Gastrocnemius medialis (tissue), 4 donors: ENCODE measurements at regions of chr14 and their contacts with region 1.

Region 1: GRCh38 chr14:103198131-103199105 is 75.2 kb downstream of the TNFAIP2 start:
- DNase-seq: peak; percentile 60 to 73
- ATAC-seq: peak; percentile 99
- H3K4me3 ChIP-seq: no peak overlapping the region
- H3K27ac ChIP-seq: peak overlapping the region; percentile 73 to 82 (median 80)
- H3K4me1 ChIP-seq: peaks cover 16 to 17% of the 10 kb centered on the region in 2 donors
- H3K27me3 ChIP-seq: no peaks in the 10 kb centered on the region
- CTCF ChIP-seq: no peak
- POLR2A ChIP-seq: peak in 1 of 2 donors; percentile 31

Region 2: GRCh38 chr14:103155013-103155412 is 43.4 kb before region 1 on chr14:
- in situ Hi-C with region 1: no loop called
- intact Hi-C with region 1: loop called (anchors 2 kb)
- DNase-seq: peak; percentile 89 to 95
- ATAC-seq: peak; percentile 98 to 99
- H3K4me3 ChIP-seq: no peak overlapping the region
- H3K27ac ChIP-seq: peak overlapping the region; percentile 32 to 58 (median 41)
- H3K4me1 ChIP-seq: peaks cover 5 to 22% of the 10 kb centered on the region in 2 donors
- H3K27me3 ChIP-seq: no peaks in the 10 kb centered on the region
- CTCF ChIP-seq: no peak
- POLR2A ChIP-seq: no peak

Region 3: DNA sequence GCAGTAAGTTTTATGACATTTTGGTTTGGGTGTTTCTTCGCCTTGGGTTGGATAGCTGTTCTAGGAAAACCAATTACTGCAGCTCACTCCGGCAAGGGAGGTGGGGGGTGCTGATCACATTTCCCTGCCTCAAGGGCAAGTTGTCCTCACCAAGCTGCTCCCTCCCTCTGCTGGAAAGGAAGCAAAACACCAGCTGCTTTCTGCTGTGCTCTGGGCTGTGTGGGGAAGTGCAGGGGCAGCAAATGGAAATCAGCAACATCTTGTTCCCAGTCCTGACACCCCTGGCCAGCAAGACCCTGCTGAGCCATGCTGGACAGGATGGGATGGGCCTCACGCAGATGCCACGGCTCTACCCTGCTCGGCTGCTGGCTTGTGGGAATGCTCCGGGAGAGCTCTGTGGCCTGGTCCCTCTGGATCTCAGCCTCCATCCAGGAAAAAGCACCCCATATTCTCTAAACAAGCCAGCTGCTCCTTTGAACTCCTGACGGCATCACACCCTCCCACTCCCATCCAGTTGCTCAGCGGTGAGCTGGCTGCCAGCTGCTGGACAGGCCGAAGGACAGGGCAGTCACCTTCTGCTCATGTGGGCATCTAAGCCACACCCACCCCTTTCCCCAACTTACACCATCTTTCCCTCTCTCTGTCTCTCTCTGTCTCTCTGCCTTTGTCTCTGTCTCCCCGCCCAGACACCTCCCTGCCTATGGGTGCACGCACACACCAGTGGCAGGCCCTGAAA is 83.2 kb after region 1 on chr14:
- in situ Hi-C with region 1: loop called in 3 of 4 experiments (anchors 10 to 25 kb)
- intact Hi-C with region 1: loop called (anchors 2 kb)
- DNase-seq: peak; percentile 48 to 71
- ATAC-seq: peak; percentile 77 to 84
- H3K4me3 ChIP-seq: no peak overlapping the region
- H3K27ac ChIP-seq: peak overlapping the region; percentile 65 to 81 (median 70)
- H3K4me1 ChIP-seq: peaks cover 24 to 27% of the 10 kb centered on the region in 2 donors
- H3K27me3 ChIP-seq: peaks cover 3 to 23% (median 14%) of the 10 kb centered on the region in 3 donors
- CTCF ChIP-seq: peak in 4 of 5 experiments; percentile 4 to 56 (median 44)
- POLR2A ChIP-seq: no peak